Activated T-helper 2 cell treated with anti-CD3 and anti-CD28 coated beads, Interferon-gamma antibody, Interleukin-2, Interleukin-4, amounts not matched to agents 10 μg/mL and 5 μg/mL and 100 μg/mL, durations not matched to agents 14 hours and 24 hours and 36 hours (primary cell): ENCODE measurements at regions of chr12 and their contacts with region 1.

Region 1: GRCh38 chr12:6323340-6323994 is 13.0 kb downstream of the PLEKHG6 start:
- DNase-seq: no peak
- H3K4me3 Mint-ChIP-seq: peak overlapping the region; percentile 45
- H3K27ac Mint-ChIP-seq: peak overlapping the region; percentile 60
- H3K4me1 Mint-ChIP-seq: peaks cover 19% of the 10 kb centered on the region
- H3K27me3 Mint-ChIP-seq: peaks cover 8% of the 10 kb centered on the region

Region 2: DNA sequence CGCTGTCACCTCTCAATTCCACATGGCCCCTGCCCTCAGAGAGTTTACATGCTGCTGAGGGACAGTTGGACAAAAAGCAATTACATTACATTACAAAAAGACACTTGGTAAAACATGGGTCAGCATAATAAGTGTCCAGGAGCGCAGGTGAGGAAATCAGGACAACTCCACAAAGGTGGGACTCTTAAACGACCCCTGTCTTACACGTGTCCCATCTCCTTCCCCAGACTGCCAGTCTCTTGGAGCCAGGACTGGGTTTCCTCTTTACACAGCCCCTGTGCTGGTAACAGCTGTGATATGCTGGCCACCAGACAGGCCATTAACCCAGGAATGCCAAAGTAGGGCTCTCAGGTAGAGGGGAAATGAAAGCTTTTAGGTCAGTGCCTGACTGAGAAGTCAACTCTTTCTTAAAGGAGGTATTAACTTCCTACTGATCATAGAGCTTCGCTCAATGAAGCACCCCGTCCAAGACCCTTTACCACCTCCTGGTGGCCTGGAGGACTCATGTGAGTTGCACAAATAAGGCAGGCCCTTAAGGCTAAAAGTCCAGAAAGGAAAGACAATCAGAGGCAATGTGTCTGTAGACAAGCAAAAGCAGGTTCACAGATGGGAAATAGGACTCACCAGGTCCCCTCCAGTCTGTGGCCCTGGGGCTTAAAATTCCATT is 434.0 kb before region 1 on chr12:
- intact Hi-C with region 1: no loop called
- DNase-seq: no peak
- H3K4me3 Mint-ChIP-seq: no peak overlapping the region
- H3K27ac Mint-ChIP-seq: no peak overlapping the region
- H3K4me1 Mint-ChIP-seq: peaks cover 4% of the 10 kb centered on the region
- H3K27me3 Mint-ChIP-seq: peaks cover 19% of the 10 kb centered on the region

Region 3: GRCh38 chr12:6335451-6336078 is 12.1 kb after region 1 on chr12:
- intact Hi-C with region 1: loop called (anchors 2 kb)
- DNase-seq: peak; percentile 76
- H3K4me3 Mint-ChIP-seq: no peak overlapping the region
- H3K27ac Mint-ChIP-seq: no peak overlapping the region
- H3K4me1 Mint-ChIP-seq: peaks cover 32% of the 10 kb centered on the region
- H3K27me3 Mint-ChIP-seq: no peaks in the 10 kb centered on the region

Region 4: DNA sequence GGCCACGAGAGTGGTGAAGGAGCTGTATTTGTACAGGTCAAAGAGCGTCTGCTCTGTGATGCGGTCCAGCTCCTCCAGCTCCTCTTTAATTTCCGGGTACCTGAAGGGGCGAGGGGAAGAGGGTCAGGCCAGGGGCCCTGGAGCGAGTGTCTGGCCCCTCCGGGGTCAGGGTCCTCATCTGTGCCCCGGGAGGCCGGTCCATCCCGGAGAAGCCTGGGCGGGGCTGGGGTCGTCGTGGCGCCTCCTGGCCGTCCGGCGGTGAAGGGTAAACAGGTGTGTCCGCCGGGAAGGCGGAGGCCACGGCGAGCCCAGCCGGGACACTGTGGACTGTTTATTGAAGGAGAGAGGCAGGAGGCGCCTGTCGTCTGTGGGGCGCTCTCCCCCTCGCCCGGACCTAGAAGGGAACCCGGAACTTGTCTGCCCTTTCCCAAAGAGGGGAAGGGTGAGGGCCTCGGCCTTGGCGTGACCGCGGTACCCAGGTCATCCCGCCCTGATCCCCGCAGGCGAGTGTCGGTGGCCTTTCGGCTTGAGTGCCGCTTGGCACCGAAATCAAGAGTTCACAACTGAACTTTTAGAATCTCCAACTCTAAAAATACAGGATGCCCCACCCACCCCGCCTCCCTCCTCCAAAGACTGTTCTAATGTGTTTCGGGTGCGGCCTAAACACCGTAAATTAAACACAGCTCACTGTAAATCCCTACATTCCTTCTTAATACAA is 40.3 kb after region 1 on chr12:
- intact Hi-C with region 1: loop called (anchors 5 kb)
- DNase-seq: no peak
- H3K4me3 Mint-ChIP-seq: peak overlapping the region; percentile 60
- H3K27ac Mint-ChIP-seq: no peak overlapping the region
- H3K4me1 Mint-ChIP-seq: peaks cover 31% of the 10 kb centered on the region
- H3K27me3 Mint-ChIP-seq: peaks cover 3% of the 10 kb centered on the region

Region 5: GRCh38 chr12:6470375-6471163 is 147.1 kb after region 1 on chr12 and contains the start of gene VAMP1:
- intact Hi-C with region 1: no loop called
- DNase-seq: peak; percentile 98
- H3K4me3 Mint-ChIP-seq: peak within 1 kb of the TSS; percentile 88
- H3K27ac Mint-ChIP-seq: peak within 1 kb of the TSS; percentile 86
- H3K4me1 Mint-ChIP-seq: peaks cover 47% of the 10 kb centered on the region
- H3K27me3 Mint-ChIP-seq: no peaks in the 10 kb centered on the region
- total RNA-seq, gene VAMP1: 38.7 and 40.7 TPM in 2 replicates